ENCODE measurements at regions of chr15 and their contacts with region 1.

Region 1: DNA sequence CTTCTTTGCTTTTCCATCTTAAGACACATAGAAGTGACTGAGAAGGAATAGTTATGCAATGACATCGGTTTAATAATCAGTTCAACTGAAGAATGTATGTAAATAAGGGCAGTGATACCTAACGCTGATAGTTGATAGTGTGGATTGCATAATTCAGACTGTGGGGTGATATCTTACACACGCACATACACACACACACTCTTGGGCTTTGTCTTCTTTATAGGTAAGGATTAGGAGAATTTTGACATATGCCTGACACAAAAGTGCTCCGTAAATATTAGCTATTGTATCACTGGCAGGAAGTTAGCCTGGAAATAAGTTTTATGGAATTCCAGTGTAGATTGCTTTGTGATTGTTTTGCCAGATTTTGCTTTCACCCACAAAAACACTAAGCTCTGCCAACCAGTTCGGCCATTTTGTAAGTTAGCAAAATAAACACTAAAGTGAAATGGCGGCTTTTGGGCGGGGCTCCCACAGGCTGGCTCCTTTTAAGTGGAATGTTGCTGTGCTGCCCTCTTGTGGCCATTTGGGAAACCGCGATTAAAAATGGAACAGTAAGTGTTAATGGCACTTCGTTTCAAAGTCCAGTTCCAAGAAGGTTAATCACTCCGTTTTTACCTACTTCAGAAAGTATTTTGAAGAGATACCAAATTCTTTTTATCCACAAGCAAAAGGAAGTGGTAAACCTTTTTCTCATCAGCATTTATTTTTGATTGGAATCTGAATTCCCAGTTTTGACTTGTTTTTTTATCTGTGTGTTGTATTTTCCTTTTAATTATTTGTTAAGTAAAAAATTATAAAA is 17.7 kb downstream of the CHD2 start:
- DNase-seq: peak; percentile 68 to 96 (median 88)

Region 2: GRCh38 chr15:92797168-92797951 is 120.4 kb before region 1 on chr15:
- intact Hi-C with region 1: loop called (anchors 2 kb)
- DNase-seq: peak in 1 of 10 donors; percentile 46

Region 3: GRCh38 chr15:92808978-92809879 is 108.6 kb before region 1 on chr15:
- intact Hi-C with region 1: loop called (anchors 1 kb)
- DNase-seq: peak; percentile 92 to 99 (median 96)

Region 4: DNA sequence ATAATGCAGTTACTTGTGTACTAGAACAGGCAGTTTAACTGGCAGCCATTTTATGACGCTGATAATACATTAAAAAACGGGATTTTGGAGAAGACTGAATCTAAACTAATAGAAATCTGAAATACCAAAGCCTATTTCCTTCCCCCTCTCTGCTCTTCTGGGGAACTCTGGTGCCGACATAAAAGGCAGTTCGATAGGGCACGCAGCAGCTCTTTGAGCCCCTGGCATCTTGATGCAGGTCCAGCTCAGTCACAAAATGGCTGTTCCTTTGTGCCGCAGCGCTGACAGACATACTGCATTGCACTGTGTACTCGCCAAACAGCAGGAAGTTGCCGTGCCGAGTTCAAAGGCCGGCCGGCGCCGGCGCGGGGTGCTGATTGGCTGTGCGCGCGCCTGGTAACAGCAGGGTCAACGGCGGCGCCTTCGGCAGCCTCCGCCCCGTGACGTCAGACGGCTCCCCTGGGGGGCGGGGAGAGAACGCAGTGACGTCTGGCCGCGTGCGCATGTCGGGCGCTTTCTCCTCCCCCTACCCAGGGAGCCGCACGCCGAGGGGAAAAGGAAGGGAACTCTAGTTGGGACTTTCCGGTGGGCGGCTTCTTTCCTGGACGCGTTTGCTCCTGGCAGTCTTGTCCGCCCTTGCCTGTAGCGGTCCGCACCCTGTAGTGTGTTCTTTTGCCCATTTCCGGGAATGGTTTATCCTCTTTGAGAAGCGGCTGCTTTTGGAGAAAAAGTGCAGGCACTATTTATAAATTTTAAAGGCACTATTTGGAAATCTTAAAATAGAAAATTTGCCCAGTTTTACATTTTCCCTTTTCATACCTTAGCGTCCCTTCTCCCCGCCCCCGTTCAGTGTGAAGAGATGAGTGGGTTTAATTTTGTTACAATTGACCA is 13.6 kb before region 1 on chr15:
- intact Hi-C with region 1: loop called (anchors 1 kb)
- DNase-seq: peak; percentile 98 to 100 (median 99)

Region 5: GRCh38 chr15:93018580-93018979 is 100.8 kb after region 1 on chr15:
- intact Hi-C with region 1: loop called (anchors 10 kb)
- DNase-seq: peak in 1 of 10 donors; percentile 90